ENCODE measurements at regions of chr3 and their contacts with region 1.

Region 1: GRCh38 chr3:13004376-13004775 is 68.9 kb downstream of the IQSEC1 start:
- DNase-seq: peak; percentile 42 to 74
- H3K4me3 ChIP-seq: no peak overlapping the region
- H3K27ac ChIP-seq: peak overlapping the region; percentile 52
- H3K4me1 ChIP-seq: peaks cover 64% of the 10 kb centered on the region
- H3K27me3 ChIP-seq: no peaks in the 10 kb centered on the region
- CTCF ChIP-seq: no peak

Region 2: DNA sequence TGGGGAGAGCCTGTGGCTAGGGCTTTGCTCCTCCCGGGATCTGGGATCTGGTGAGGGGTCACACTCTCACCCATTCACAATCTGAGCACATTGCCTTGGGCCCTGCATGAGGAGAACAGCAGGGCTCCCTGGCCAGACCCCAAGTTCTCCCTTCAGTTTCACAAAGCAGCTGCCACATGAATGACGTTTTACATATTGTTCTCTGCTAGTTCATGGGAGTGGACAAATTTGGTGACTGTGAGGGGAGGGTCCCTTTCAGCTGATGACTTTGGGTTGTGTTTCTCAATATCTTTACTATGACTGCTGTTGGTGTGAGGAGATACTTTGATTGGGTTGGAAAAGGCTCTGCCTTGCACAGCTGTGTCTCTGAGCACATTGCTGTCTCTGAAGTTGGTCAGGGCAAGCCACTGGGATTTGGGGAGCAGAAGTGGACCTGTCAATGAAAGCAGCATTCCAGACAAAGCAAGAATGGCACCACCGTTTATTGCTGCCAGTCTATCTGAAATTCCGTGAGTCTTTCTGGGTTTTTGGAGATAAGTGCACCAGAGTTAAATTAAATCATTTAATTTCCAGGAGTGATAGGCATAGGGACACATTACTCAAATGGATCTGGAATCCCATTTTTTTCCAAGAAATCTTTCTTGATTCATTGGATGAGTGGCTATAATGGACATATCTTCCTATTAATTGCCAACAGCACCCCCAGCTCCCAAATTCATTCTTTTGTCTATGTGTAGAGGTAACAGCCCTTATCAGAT is 856.0 kb before region 1 on chr3:
- CTCF ChIA-PET with region 1: no interaction called
- POLR2A ChIA-PET with region 1: no interaction called
- intact Hi-C with region 1: no loop called
- DNase-seq: no peak
- H3K4me3 ChIP-seq: no peak overlapping the region
- H3K27ac ChIP-seq: no peak overlapping the region
- H3K4me1 ChIP-seq: no peaks in the 10 kb centered on the region
- H3K27me3 ChIP-seq: no peaks in the 10 kb centered on the region
- CTCF ChIP-seq: no peak

Region 3: GRCh38 chr3:12601072-12601471 is 403.3 kb before region 1 on chr3:
- CTCF ChIA-PET with region 1: interaction called, 13 read pairs
- POLR2A ChIA-PET with region 1: no interaction called
- intact Hi-C with region 1: no loop called
- DNase-seq: no peak
- H3K4me3 ChIP-seq: no peak overlapping the region
- H3K27ac ChIP-seq: no peak overlapping the region
- H3K4me1 ChIP-seq: no peaks in the 10 kb centered on the region
- H3K27me3 ChIP-seq: no peaks in the 10 kb centered on the region
- CTCF ChIP-seq: no peak

Region 4: DNA sequence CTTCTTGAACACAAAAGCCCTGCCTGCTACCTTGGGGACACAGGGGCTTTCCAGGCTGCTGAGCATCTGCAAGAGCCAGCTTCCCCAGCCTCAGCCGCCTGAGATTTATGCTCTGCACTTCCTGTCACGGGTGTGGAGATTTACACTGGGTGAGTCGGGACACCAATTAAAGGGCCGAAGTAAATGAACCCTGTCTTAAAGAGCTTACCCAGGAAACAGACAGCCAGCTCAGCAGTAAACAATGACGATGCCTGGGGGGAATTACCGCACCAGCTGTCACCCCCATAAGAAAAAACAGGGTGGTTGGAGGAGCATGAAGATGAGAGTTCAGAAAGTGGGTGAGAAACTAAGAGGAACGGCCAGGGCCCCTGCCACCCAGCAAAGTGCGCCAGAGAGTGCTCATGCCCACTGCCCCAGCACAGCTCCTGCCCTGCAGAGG is 106.3 kb after region 1 on chr3:
- CTCF ChIA-PET with region 1: no interaction called
- POLR2A ChIA-PET with region 1: no interaction called
- intact Hi-C with region 1: no loop called
- DNase-seq: peak; percentile 45 to 90
- H3K4me3 ChIP-seq: peak overlapping the region; percentile 31; the same call in 1 of the 2 replicates
- H3K27ac ChIP-seq: peak overlapping the region; percentile 82
- H3K4me1 ChIP-seq: peaks cover 84% of the 10 kb centered on the region
- H3K27me3 ChIP-seq: no peaks in the 10 kb centered on the region
- CTCF ChIP-seq: no peak

Measured in PC-9 (cell line).